Spleen (tissue), 13 donors: ENCODE measurements at regions of chr11 and their contacts with region 1.

Region 1: GRCh38 chr11:74611369-74611861 is 19.0 kb downstream of the POLD3 start:
- DNase-seq: no peak
- H3K4me3 ChIP-seq: no peak overlapping the region
- H3K27ac ChIP-seq: peak overlapping the region in 1 of 8 donors; percentile 44
- H3K4me1 ChIP-seq: peaks cover 0 to 25% (median 4%) of the 10 kb centered on the region in 6 donors
- H3K27me3 ChIP-seq: no peaks in the 10 kb centered on the region
- CTCF ChIP-seq: peak in 7 of 11 experiments; percentile 18 to 38 (median 32)
- POLR2A ChIP-seq: no peak

Region 2: DNA sequence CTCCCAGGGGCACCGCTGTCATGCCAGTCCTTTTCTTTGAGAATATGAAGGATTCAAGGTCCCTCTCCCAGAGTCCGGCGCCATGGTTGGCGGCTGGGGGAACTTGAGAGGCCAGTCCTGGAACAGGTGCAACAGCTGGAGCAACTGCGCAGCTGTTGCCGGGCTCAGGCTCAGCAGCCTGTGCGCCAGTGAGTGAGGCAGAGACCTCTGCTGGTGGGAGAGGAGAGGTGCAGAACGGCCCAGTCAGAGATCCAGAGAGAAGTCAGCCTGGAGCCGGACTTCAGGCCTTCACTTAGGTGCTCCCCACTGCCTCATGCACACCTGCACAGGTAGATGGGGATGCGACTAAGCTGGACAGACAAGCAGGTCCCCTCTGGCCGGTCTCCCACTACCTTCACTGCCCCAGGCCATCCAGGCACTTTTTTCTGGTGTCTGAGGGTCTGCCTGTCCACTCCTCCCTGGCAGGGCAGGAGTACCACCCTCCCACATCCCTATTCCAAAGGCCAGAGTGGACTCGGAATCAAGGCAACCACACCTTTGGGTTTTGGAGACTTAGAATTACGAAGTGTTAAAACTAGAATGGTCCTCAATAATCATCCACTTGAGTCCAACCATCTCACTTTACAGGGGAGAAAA is 115.2 kb after region 1 on chr11:
- intact Hi-C with region 1: loop called (anchors 10 kb)
- DNase-seq: peak; percentile 86
- H3K4me3 ChIP-seq: no peak overlapping the region
- H3K27ac ChIP-seq: no peak overlapping the region
- H3K4me1 ChIP-seq: peaks cover 0 to 17% (median 8%) of the 10 kb centered on the region in 6 donors
- H3K27me3 ChIP-seq: peaks cover 0 to 46% (median 14%) of the 10 kb centered on the region in 7 donors
- CTCF ChIP-seq: peak; percentile 38 to 93 (median 86)
- POLR2A ChIP-seq: no peak

Region 3: DNA sequence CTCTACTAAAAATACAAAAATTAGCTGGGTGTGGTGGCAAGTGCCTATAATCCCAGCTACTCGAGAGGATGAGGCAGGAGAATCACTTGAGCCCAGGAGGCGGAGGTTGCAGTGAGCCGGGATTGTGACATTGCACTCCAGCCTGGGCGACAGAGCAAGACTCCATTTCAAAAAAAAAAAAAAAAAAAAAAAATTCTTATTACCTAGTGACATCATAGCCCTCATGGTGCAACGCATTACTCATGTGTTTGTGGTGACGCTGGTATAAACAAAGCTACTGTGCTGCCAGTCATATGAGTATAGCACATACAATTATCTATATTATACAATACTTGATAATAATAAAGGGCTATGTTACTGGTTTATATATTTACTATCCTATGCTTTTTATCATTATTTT is 444.1 kb after region 1 on chr11:
- intact Hi-C with region 1: no loop called
- DNase-seq: no peak
- H3K4me3 ChIP-seq: no peak overlapping the region
- H3K27ac ChIP-seq: no peak overlapping the region
- H3K4me1 ChIP-seq: no peaks in the 10 kb centered on the region
- H3K27me3 ChIP-seq: peaks cover 0 to 9% (median 0%) of the 10 kb centered on the region in 7 donors
- CTCF ChIP-seq: no peak
- POLR2A ChIP-seq: no peak